ENCODE measurements at regions of chr3 and their contacts with region 1.

Region 1: GRCh38 chr3:141303481-141304223 is 64.7 kb upstream of the ZBTB38 start:
- DNase-seq: peak in 1 of 2 donors; percentile 43
- ATAC-seq: peak; percentile 81

Region 2: DNA sequence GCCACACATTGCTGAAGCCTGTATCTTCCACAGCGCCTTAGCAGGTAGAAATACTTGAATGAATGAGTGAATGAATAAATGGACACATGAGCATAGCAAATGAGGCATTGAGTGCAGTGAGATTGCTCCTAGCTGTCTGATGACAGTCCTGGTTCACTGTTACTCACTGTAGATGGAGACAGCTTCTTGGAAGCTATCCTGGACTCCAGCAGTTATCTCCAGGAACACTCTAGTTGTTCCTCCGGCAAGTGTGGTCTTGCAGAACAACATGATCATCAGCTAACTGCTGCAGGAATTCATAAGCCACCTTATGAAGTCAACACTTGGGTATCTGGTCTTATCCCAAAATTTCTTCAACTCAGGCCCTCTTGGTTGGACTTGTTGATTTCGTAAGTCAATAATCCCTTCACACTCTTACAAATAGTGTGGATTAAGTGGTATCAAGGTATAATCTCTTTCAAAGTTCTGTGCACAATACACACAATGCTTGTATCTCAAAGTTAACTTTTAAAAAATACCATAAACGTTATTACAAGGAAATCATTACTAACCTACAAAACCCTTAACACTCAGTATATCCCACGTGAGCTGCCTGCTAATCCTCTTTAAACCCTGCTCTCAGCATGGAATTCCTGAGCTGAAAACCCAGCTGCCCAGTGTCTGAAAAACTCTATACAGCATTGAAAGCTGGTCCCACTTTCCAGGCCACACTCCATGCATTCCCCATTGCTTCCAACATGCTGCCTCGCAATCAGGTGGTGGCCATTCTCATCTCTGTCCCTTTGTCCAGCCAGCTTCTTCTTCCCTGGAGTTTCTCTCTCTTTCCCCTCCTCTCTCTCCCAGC is 50.2 kb after region 1 on chr3:
- intact Hi-C with region 1: loop called in 1 of 2 experiments (anchors 10 kb)
- DNase-seq: no peak
- ATAC-seq: no peak